CD8-positive, alpha-beta T cell (primary cell): ENCODE measurements at regions of chr12 and their contacts with region 1.

Region 1: DNA sequence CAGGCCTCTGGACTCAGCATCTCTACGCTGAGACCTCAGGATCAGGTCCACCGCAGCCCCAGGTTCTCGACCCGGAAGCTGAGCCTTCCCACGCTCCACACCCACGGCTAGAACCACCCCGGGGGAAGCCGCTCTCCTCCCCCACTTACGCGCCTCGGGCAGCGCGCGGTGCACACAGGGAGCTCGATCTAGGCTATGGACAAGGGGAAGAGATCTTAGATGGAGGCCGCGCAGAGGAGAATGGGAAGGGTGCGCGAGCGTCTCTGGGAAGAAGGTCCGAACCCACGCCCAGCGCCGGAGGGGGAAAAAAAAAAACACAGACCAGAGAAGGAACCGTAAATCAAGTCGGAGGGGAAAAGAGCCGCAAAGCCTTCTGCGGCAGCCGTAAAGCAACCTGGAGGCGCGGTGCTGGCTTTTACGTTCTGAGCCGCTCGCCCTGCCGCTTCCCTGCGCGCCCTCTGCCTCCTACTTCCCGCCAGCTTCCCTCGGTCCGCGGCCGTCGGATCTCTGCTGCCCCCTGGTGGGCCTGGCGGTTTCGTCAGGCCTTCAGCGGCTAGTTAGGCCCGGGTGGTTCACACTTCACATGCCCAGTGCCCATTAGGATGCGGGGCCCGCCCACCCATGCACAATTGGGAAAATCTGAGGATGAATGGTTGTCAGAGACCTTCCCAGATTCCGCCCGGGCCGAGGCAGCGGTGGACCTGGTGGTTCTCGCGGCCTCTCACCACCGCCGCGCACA is at the start of gene RAD52:
- DNase-seq: peak; percentile 93 to 99 (median 98)
- ATAC-seq: peak; percentile 91
- H3K4me3 ChIP-seq: peak within 1 kb of the TSS; percentile 92 to 98
- H3K4me3 Mint-ChIP-seq: peak within 1 kb of the TSS; percentile 94
- H3K27ac ChIP-seq: peak within 1 kb of the TSS; percentile 70 to 81
- H3K27ac Mint-ChIP-seq: peak within 1 kb of the TSS; percentile 92
- H3K4me1 ChIP-seq: peaks cover 6% of the 10 kb centered on the region
- H3K4me1 Mint-ChIP-seq: peaks cover 26% of the 10 kb centered on the region
- H3K27me3 ChIP-seq: no peaks in the 10 kb centered on the region
- H3K27me3 Mint-ChIP-seq: no peaks in the 10 kb centered on the region
- CTCF ChIP-seq: peak; percentile 94
- total RNA-seq, gene RAD52: 8.1 to 9.6 TPM

Region 2: DNA sequence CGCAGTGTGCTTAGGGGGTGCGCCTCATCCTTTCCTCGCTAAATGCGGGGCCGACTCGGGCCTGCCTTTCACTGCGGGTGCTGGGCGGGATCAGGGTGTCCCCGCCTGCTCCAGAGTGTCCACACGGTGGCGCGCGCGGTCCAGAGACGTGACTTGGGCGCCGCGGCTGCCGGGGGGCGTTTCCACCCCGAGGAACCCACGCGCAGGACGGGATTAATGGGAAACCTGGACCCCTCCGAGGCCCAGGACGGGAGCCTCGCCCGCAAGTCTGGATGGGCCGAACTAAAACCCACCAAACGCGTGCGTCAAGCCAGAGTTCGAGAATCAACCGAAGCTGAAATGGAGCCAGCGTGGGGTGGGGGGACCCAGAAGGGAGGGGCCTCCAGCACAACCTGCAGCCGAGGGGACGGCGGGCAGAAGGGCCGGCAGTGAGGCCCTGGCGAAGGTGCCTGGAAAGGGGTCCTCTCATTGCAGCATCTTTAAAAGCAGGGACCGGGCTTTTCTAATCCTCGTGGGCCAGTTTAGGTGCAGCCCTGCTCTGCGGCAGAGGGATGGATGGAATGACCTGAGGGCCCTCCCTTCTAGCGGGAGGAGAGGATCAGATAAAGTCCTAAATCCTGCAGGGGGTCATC is 379.7 kb before region 1 on chr12:
- CTCF ChIA-PET with region 1: interaction called, 6 read pairs
- POLR2A ChIA-PET with region 1: no interaction called
- intact Hi-C with region 1: loop called (anchors 1 to 2 kb)
- DNase-seq: peak; percentile 74 to 93 (median 87)
- ATAC-seq: peak; percentile 98
- H3K4me3 ChIP-seq: peak overlapping the region; percentile 63 to 76
- H3K4me3 Mint-ChIP-seq: peak overlapping the region; percentile 86
- H3K27ac ChIP-seq: peak overlapping the region in 1 of 2 experiments; percentile 8
- H3K27ac Mint-ChIP-seq: peak overlapping the region; percentile 77
- H3K4me1 ChIP-seq: peaks cover 43% of the 10 kb centered on the region
- H3K4me1 Mint-ChIP-seq: peaks cover 45% of the 10 kb centered on the region
- H3K27me3 ChIP-seq: no peaks in the 10 kb centered on the region
- H3K27me3 Mint-ChIP-seq: no peaks in the 10 kb centered on the region
- CTCF ChIP-seq: peak; percentile 88

Region 3: GRCh38 chr12:685388-685787 is 264.2 kb before region 1 on chr12:
- CTCF ChIA-PET with region 1: no interaction called
- POLR2A ChIA-PET with region 1: no interaction called
- intact Hi-C with region 1: loop called in 1 of 2 experiments (anchors 1 kb)
- DNase-seq: peak; percentile 69 to 97 (median 85)
- ATAC-seq: peak; percentile 89
- H3K4me3 ChIP-seq: no peak overlapping the region
- H3K4me3 Mint-ChIP-seq: peak overlapping the region; percentile 47
- H3K27ac ChIP-seq: peak overlapping the region; percentile 67 to 87
- H3K27ac Mint-ChIP-seq: peak overlapping the region; percentile 98
- H3K4me1 ChIP-seq: peaks cover 26% of the 10 kb centered on the region
- H3K4me1 Mint-ChIP-seq: peaks cover 50% of the 10 kb centered on the region
- H3K27me3 ChIP-seq: no peaks in the 10 kb centered on the region
- H3K27me3 Mint-ChIP-seq: no peaks in the 10 kb centered on the region
- CTCF ChIP-seq: no peak

Region 4: GRCh38 chr12:913919-914708 is 35.5 kb before region 1 on chr12:
- CTCF ChIA-PET with region 1: interaction called, 6 read pairs
- POLR2A ChIA-PET with region 1: interaction called, 7 read pairs
- intact Hi-C with region 1: loop called in 1 of 2 experiments (anchors 5 kb)
- DNase-seq: no peak
- ATAC-seq: no peak
- H3K4me3 ChIP-seq: no peak overlapping the region
- H3K4me3 Mint-ChIP-seq: no peak overlapping the region
- H3K27ac ChIP-seq: no peak overlapping the region
- H3K27ac Mint-ChIP-seq: peak overlapping the region; percentile 74
- H3K4me1 ChIP-seq: peaks cover 12% of the 10 kb centered on the region
- H3K4me1 Mint-ChIP-seq: peaks cover 26% of the 10 kb centered on the region
- H3K27me3 ChIP-seq: no peaks in the 10 kb centered on the region
- H3K27me3 Mint-ChIP-seq: no peaks in the 10 kb centered on the region
- CTCF ChIP-seq: no peak

Region 5: GRCh38 chr12:990661-991349 is 41.2 kb after region 1 on chr12 and contains the start of gene ERC1:
- CTCF ChIA-PET with region 1: interaction called, 6 read pairs
- POLR2A ChIA-PET with region 1: interaction called, 17 read pairs
- intact Hi-C with region 1: loop called (anchors 1 kb)
- DNase-seq: peak; percentile 71 to 92 (median 80)
- ATAC-seq: peak; percentile 83
- H3K4me3 ChIP-seq: peak within 1 kb of the TSS; percentile 68 to 98
- H3K4me3 Mint-ChIP-seq: peak within 1 kb of the TSS; percentile 94
- H3K27ac ChIP-seq: peak within 1 kb of the TSS; percentile 78 to 82
- H3K27ac Mint-ChIP-seq: peak within 1 kb of the TSS; percentile 95
- H3K4me1 ChIP-seq: peaks cover 27% of the 10 kb centered on the region
- H3K4me1 Mint-ChIP-seq: peaks cover 50% of the 10 kb centered on the region
- H3K27me3 ChIP-seq: no peaks in the 10 kb centered on the region
- H3K27me3 Mint-ChIP-seq: no peaks in the 10 kb centered on the region
- CTCF ChIP-seq: no peak
- total RNA-seq, gene ERC1: 34.5 to 34.6 TPM